Cardiac septum (tissue), 1 donor: ENCODE measurements at regions of chr3 and their contacts with region 1.

Region 1: GRCh38 chr3:181700168-181701087 is 11.3 kb upstream of the SOX2 start:
- DNase-seq: no peak

Region 2: GRCh38 chr3:181210275-181210674 is 490.2 kb before region 1 on chr3:
- intact Hi-C with region 1: loop called (anchors 10 kb)
- DNase-seq: no peak

Region 3: DNA sequence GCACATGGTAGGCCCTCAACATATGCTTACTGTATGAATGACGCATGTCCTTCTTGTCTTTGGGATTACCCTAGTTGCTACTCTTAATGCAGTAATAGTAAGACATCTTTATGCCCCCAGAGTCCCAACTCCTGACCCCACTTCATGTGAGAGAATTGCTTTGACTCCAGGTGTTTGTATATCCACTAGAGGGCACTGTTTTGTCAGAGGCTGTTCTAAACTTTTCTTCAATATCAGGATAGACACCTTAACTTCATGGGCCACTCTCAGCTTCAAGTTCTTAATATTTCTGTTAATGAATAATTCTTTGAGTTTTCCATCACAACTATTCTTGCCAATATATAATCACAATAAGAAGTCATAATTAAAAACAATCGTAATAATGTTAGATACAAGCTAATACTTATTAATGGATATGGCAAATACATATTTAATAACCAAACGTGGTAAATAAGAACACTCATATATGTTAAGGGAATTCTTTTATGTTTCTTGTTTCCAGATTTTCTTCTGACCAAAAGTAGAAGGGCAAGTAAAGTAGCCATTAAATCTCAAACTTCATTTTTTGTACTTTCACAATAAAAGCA is 373.7 kb before region 1 on chr3:
- intact Hi-C with region 1: loop called (anchors 1 kb)
- DNase-seq: no peak

Region 4: DNA sequence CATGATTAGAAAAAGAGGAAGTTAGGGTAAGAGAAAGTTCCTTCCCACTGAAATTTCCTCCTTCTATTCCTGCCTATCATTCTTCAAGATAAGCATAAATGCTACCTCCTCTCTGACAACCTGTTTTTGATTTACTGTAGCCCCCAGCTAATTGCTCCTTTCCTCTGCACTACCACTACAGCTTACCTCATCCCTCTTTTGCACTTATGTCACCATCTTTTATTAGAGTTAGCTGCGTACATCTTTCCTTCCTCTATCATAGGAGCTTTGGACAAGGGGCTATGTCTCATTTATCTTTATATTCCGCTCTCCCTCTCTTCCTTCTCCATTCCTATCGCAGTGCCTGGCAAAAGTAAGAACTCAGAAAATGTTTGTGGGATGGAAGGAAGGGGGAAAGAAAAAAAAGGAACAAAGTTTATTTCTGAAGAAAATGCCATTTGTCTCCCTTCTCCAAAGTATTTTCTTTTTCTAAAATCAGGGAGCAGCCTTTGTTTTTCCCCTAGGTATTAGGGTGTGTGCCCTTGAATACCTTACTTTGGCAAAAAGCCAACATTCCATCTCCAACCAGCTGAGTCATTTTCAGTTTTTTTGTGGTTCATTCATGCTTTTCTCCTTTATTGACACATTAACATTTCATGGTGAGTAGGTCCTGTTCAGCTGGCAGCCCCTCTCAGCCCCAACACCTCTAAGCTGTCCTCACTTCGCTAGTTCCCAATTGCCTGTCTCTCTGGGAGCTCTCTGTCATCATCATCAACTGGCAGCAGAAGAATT is 76.3 kb before region 1 on chr3:
- intact Hi-C with region 1: no loop called
- DNase-seq: no peak